ENCODE measurements at regions of chr14 and their contacts with region 1.

Region 1: GRCh38 chr14:21455911-21456667 is at the start of gene CHD8:
- DNase-seq: peak; percentile 100
- H3K4me3 Mint-ChIP-seq: peak within 1 kb of the TSS; percentile 91
- H3K27ac Mint-ChIP-seq: peak within 1 kb of the TSS; percentile 98
- H3K4me1 Mint-ChIP-seq: peaks cover 37% of the 10 kb centered on the region
- H3K27me3 Mint-ChIP-seq: no peaks in the 10 kb centered on the region
- total RNA-seq, gene CHD8: 73.9 to 75.5 TPM

Region 2: GRCh38 chr14:21263656-21264411 is 192.3 kb before region 1 on chr14:
- CTCF ChIA-PET with region 1: interaction called, 3 read pairs
- intact Hi-C with region 1: loop called (anchors 1 kb)
- DNase-seq: no peak
- H3K4me3 Mint-ChIP-seq: peak overlapping the region; percentile 100
- H3K27ac Mint-ChIP-seq: peak overlapping the region; percentile 100
- H3K4me1 Mint-ChIP-seq: peaks cover 68% of the 10 kb centered on the region
- H3K27me3 Mint-ChIP-seq: no peaks in the 10 kb centered on the region

Region 3: DNA sequence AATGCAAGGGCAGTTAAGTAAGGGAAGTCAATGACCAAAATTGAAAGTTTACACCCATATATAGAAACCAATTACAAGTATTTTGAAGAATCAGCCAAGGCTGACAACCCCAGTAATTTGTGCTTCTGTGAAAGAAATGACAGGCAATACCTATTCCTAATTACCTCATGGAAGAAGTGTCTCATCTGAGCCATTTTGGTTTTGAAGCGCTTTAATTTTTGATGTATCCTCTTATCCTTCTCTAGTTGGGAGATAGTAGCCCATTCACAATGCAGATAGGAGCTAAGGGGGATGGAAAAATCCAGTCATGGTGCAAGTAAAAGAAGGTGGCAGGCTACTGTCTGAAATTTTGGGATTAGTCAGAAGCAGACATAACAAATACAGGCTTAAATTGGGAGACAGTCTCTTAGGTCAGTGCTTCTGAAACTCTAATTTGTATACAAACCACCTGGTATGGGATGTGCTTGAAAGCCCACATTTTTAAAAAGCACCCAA is 41.9 kb before region 1 on chr14:
- CTCF ChIA-PET with region 1: interaction called, 4 read pairs
- intact Hi-C with region 1: loop called (anchors 1 kb)
- DNase-seq: peak; percentile 14
- H3K4me3 Mint-ChIP-seq: no peak overlapping the region
- H3K27ac Mint-ChIP-seq: peak overlapping the region; percentile 77
- H3K4me1 Mint-ChIP-seq: peaks cover 35% of the 10 kb centered on the region
- H3K27me3 Mint-ChIP-seq: no peaks in the 10 kb centered on the region

Region 4: DNA sequence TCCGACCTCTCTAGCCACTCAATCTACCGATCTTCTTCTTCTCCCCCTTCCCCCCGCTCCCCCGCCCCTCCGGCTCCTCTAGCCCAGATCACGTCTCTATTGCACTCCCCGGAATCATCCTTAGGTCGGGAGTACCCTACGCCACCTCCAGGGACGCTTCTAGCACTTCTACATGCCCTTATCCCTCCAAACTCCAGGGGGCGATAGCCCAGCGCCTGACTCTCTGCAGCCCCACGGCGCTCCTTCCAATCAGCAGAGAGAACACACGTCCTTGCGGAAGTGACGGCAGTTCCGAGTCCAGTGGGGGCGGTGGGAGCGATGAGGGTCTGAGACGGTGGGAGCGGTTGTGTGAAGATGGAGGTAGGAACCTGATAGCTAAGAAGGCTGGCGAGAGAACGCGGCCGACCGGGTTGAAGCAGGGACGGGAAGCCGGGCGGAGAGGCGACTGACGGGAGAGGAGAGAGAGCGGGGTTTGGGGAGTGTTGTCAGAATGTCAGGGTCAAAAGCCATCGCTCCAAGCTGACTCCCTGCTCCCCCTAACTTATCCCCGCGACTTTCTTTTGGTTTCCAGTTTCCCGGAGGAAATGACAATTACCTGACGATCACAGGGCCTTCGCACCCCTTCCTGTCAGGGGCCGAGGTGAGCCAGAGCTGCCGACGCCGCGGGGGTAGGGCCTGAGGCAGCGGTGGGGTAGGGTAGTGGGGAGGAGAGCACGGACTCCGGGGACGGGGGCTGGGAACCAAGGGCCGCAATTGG is 21.0 kb after region 1 on chr14 and contains the starts of genes RAB2B and TOX4:
- CTCF ChIA-PET with region 1: interaction called, 12 read pairs
- intact Hi-C with region 1: loop called (anchors 1 kb)
- DNase-seq: peak; percentile 97
- H3K4me3 Mint-ChIP-seq: peak within 1 kb of the TSS; percentile 100
- H3K27ac Mint-ChIP-seq: peak within 1 kb of the TSS; percentile 98
- H3K4me1 Mint-ChIP-seq: peaks cover 31% of the 10 kb centered on the region
- H3K27me3 Mint-ChIP-seq: no peaks in the 10 kb centered on the region
- total RNA-seq, gene RAB2B: 20.5 to 21.4 TPM
- total RNA-seq, gene TOX4: 57.4 to 58.6 TPM

Region 5: GRCh38 chr14:21525962-21526671 is 70.0 kb after region 1 on chr14 and contains the start of gene SALL2:
- CTCF ChIA-PET with region 1: interaction called, 4 read pairs
- intact Hi-C with region 1: loop called (anchors 1 kb)
- DNase-seq: peak; percentile 86
- H3K4me3 Mint-ChIP-seq: peak within 1 kb of the TSS; percentile 79
- H3K27ac Mint-ChIP-seq: peak within 1 kb of the TSS; percentile 70
- H3K4me1 Mint-ChIP-seq: peaks cover 9% of the 10 kb centered on the region
- H3K27me3 Mint-ChIP-seq: no peaks in the 10 kb centered on the region
- total RNA-seq, gene SALL2: 3.1 to 4.1 TPM

Region 6: DNA sequence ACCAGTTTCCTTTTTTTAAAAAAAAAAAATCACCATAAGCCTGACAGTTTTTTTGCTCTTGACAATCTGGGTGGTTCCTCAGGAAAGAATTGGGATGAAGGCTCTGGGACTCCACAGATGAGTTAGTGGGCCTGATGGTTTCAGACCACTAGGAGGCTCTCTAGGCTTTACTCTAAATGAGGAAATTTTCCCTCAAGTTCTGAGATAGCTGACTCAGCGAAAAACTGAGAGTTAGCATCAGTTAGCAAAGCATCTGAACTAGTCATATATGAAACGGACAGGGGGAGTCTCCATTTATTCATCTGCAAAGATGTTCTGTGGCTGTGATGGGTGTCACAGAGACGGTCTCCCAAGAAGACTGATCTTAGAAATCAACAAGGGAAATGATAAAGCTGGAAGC is 531.8 kb after region 1 on chr14:
- CTCF ChIA-PET with region 1: no interaction called
- intact Hi-C with region 1: no loop called
- DNase-seq: peak; percentile 40
- H3K4me3 Mint-ChIP-seq: peak overlapping the region; percentile 27
- H3K27ac Mint-ChIP-seq: peak overlapping the region; percentile 92
- H3K4me1 Mint-ChIP-seq: peaks cover 34% of the 10 kb centered on the region
- H3K27me3 Mint-ChIP-seq: no peaks in the 10 kb centered on the region